HEK293T (cell line): ENCODE measurements at regions of chr20 and their contacts with region 1.

Region 1: DNA sequence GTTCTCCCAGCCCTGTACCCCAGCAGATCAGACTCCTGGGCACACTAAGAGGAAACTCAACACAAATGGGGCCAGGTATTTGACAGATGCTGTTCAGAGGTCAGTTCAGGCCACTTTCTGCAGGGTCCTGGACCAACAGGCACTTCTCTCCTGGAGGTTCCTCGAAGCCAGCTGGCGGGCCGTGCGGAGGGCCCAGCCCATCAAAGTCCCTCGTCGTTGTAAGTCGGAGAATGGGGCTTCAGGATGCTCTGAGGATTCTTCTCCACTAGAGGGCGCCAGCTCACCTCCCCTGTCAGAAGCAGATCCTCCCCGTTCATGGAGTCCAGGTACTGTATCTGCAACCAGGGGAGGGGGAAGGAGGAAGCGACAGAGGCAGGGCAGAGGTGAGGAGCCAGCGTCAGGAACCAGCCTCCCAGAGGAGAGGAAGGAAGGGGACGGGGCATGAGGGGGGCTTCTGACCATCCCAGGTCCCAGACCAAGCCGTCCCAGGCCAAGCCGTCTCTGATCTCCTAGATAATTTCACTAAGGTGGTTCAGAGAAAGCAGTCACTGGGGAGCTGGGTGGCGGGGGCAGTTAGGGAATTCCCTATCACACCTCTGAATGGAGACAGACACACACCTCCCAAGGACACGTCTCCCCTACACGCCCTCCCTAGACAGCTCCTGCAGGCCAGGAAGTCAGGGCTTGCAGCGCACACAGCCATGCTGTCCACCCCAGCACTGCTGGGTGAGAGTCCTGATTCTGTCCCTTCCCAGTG is 11.7 kb upstream of the FAM83C start:
- DNase-seq: peak; percentile 85

Region 2: DNA sequence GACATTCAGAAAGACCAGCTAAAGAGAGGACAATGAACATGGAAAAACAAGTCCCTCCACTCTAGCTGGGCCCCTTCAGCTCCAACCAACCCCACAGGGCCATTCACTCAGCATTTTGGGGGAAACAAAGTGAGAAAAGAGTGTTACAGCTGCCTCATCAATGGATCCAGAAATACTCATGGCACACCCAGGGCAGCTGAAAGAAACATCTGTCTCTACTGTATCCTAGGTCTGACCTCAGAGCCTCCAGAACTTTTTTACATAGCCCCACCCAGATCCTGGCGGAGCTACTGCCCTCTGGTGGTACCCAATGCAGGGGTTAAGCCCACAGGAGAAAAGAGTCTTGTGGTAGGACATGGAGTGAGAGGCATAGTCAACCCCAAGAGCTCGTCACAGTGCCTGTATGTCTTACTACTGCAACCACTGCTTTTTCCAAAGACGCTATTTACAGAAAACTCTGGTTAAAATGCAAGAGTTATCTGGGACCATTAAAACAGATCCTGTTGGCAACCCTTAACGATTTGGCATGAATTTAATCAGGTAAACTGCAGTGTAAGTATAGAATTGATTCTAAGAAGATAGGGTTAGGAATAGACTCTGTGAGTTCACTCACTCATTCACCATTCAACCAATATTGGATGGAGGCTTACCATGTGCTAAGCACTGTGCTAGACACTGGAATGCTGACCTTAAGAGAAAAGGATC is 25.7 kb after region 1 on chr20:
- CTCF ChIA-PET with region 1: interaction called, 36 read pairs
- POLR2A ChIA-PET with region 1: interaction called, 8 read pairs
- DNase-seq: peak; percentile 71